ENCODE measurements at regions of chr9 and their contacts with region 1.

Region 1: GRCh38 chr9:33924978-33925797 is 108.2 kb downstream of the UBE2R2 start:
- DNase-seq: no peak
- H3K4me3 ChIP-seq: no peak overlapping the region
- H3K27ac ChIP-seq: peak overlapping the region in 1 of 4 donors; percentile 48
- H3K4me1 ChIP-seq: peaks cover 0 to 12% (median 4%) of the 10 kb centered on the region in 4 donors
- H3K27me3 ChIP-seq: no peaks in the 10 kb centered on the region
- CTCF ChIP-seq: peak in 3 of 4 experiments; percentile 29 to 65 (median 39)
- EP300 ChIP-seq: no peak
- POLR2A ChIP-seq: no peak

Region 2: DNA sequence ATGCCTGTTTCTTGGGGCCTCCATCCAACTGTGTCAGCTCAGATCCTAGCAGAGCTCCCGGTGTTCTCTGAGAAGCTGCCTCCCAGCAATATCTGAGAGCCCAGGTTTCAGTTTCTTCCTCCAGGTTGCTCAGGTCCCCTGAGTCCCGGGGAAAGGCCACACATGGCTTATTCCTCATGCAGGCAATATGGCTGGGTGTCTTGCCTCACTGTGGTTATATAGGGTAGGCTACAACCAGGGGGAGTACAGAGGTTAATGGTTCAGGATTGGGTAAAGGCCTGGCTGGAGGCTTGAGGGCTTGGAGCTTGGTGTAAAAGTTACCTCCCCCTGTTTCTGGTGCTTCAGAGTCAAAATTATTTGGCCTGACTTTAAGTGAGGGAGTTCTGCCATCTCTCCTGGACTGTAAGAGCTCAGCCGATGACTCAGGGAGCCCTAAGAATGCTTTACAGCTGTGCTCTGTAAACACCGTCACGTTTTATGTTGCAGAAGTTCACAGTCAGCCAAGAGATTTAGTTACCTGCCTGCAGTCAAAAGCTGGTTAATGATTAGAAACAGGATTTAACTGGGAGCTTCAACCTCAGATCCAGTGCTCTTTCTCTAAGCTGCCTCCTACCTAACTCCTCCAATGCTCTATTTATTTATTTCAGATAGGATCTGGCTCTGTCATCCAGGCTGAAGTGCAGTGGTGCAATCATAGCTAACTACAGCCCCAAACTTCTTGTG is 147.8 kb after region 1 on chr9:
- intact Hi-C with region 1: loop called (anchors 5 kb)
- DNase-seq: peak; percentile 69
- H3K4me3 ChIP-seq: no peak overlapping the region
- H3K27ac ChIP-seq: peak overlapping the region; percentile 67 to 77 (median 72)
- H3K4me1 ChIP-seq: peaks cover 0 to 24% (median 22%) of the 10 kb centered on the region in 4 donors
- H3K27me3 ChIP-seq: no peaks in the 10 kb centered on the region
- CTCF ChIP-seq: no peak
- EP300 ChIP-seq: no peak
- POLR2A ChIP-seq: no peak